Activated T-helper 2 cell treated with anti-CD3 and anti-CD28 coated beads, Interferon-gamma antibody, Interleukin-2, Interleukin-4, amounts not matched to agents 10 μg/mL and 5 μg/mL and 100 μg/mL, durations not matched to agents 14 hours and 24 hours and 36 hours (primary cell): ENCODE measurements at regions of chr5 and their contacts with region 1.

Region 1: DNA sequence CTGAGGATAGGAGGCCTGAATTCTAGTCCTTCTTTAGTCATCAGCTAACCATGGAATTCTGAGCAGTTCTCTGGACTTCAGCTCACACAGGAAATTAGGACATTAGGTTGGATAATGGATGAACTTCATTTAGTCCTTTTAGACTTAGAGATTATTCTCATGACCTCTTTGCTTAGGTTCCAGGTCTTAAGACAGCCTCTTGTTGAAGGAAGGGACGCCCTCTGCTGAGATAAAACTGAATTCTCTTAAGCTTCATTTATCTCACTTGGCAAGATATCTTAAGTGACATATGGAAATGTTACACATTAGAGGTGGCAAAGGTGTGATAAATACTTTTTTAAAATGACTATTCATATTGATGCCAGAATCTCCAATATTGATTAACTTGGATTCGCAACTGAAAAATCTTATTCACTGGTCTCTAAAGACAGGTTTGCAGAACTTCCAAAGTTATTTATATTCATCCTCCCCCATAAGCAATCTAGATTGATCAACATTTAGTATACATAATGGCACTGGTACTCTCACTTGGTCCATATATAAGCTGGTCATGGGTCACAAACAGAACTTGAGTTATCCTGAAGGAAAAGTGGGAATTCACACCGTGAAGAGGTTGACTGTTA is 16.9 kb upstream of the ZNF366 start:
- DNase-seq: no peak
- H3K4me3 Mint-ChIP-seq: no peak overlapping the region
- H3K27ac Mint-ChIP-seq: no peak overlapping the region
- H3K4me1 Mint-ChIP-seq: peaks cover 4% of the 10 kb centered on the region
- H3K27me3 Mint-ChIP-seq: peaks cover 5% of the 10 kb centered on the region

Region 2: GRCh38 chr5:72248352-72249032 is 275.6 kb before region 1 on chr5:
- intact Hi-C with region 1: no loop called
- DNase-seq: no peak
- H3K4me3 Mint-ChIP-seq: no peak overlapping the region
- H3K27ac Mint-ChIP-seq: no peak overlapping the region
- H3K4me1 Mint-ChIP-seq: peaks cover 19% of the 10 kb centered on the region
- H3K27me3 Mint-ChIP-seq: no peaks in the 10 kb centered on the region

Region 3: DNA sequence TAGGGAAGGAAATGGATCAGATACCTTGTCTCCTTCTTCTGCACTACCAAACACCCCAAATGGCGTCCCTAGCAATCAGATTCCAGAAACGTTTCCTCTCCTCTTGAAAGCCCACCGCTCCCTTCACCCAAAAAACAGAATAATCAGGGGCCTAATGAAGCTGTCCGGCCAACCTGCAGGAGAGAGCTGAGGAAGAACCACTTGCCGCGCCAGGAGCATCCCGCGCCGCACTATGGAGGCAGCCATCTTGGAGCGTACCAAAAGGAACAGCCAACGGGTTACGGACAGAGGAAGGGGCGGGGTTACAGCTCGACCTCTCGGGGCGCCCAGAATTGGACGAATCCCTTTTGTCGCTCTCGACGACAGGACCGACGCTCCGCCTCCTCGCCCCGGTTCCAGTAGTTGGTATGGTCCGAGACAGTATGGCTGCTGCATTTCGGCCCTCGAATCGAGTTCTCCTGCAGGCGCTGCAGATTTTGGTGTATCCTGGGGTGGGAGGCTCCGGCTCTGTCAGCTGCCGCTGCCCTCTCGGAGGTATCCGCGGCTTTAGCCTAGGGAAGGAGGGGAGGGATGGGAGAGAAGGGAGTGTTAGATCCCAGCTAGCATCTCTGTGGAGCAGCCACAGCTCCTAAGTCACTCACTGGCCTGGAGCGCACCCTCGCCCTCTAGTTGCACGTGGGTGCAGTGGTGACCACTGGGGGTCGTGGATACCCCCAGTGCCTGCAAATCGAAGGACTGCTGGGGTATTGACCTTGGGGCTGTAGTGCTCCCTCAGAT is 203.9 kb before region 1 on chr5 and contains the starts of genes MRPS27 and PTCD2:
- intact Hi-C with region 1: no loop called
- DNase-seq: peak; percentile 93
- H3K4me3 Mint-ChIP-seq: peak within 1 kb of the TSS; percentile 93
- H3K27ac Mint-ChIP-seq: peak within 1 kb of the TSS; percentile 85
- H3K4me1 Mint-ChIP-seq: peaks cover 31% of the 10 kb centered on the region
- H3K27me3 Mint-ChIP-seq: no peaks in the 10 kb centered on the region
- total RNA-seq, gene MRPS27: 96.8 and 98.4 TPM in 2 replicates
- total RNA-seq, gene PTCD2: 14.7 and 16.8 TPM in 2 replicates

Region 4: GRCh38 chr5:72366324-72366976 is 157.6 kb before region 1 on chr5:
- intact Hi-C with region 1: loop called (anchors 2 kb)
- DNase-seq: peak; percentile 14
- H3K4me3 Mint-ChIP-seq: no peak overlapping the region
- H3K27ac Mint-ChIP-seq: no peak overlapping the region
- H3K4me1 Mint-ChIP-seq: peaks cover 11% of the 10 kb centered on the region
- H3K27me3 Mint-ChIP-seq: no peaks in the 10 kb centered on the region

Region 5: DNA sequence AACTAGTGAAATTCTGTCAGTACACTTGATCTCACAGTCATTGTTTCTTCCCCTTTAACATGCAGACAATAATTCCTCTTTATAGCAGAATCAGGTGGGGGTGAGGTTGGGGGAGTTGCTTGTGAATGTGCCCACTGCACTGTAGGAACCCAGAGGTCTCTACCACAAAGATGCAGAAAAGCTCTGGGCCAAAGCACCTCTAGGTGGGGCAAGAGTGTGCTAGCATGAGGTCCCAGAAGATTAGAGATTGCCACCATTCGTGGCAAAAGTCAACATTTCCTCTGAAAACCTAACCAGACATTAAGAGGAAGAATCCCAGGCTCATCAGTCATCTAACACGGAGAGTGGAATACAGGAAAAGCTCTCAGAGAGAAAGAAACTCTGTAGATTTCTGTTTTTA is 129.4 kb before region 1 on chr5:
- intact Hi-C with region 1: loop called (anchors 10 kb)
- DNase-seq: no peak
- H3K4me3 Mint-ChIP-seq: no peak overlapping the region
- H3K27ac Mint-ChIP-seq: no peak overlapping the region
- H3K4me1 Mint-ChIP-seq: no peaks in the 10 kb centered on the region
- H3K27me3 Mint-ChIP-seq: peaks cover 29% of the 10 kb centered on the region